Aorta (tissue), 5 donors: ENCODE measurements at regions of chr19 and their contacts with region 1.

Region 1: DNA sequence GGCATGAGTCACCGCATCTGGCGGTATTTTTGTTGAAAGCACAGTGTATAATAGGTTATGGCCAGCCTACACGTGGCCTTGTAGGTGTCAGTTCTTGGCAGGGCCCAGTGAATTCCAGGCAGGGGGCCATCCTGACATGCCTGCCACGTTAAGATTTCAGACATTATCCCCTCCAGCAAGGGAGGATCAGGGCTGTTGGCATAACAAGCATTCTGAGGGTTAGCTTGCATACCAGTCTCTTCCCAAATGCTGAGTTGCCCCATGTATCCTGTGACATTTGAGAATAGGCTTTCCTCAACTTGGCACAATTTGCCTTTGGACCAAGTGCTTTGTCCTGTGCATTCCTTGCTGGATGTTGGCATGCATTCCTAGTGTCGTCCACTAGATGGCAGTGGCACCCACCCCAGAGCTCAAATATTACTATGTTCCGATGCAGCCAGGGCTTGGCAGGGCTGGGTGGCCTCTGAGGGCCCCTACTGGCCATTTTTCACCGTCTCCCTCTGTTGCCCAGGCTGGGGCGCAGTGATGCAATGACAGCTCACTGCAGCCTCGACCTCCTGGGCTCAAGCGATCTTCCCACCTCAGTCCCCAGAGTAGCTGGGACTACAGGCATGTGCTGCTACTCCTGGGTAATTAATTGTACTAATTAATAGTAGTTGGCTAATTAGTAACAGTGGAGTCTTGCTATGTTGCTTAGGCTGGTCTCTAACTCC is 31.2 kb downstream of the NLRP12 start:
- DNase-seq: peak; percentile 88 to 90
- ATAC-seq: peak; percentile 91
- H3K4me3 ChIP-seq: no peak overlapping the region
- H3K27ac ChIP-seq: no peak overlapping the region
- H3K4me1 ChIP-seq: no peaks in the 10 kb centered on the region
- H3K27me3 ChIP-seq: no peaks in the 10 kb centered on the region

Region 2: GRCh38 chr19:53671663-53672062 is 121.2 kb before region 1 on chr19:
- intact Hi-C with region 1: no loop called
- DNase-seq: no peak
- ATAC-seq: no peak
- H3K4me3 ChIP-seq: no peak overlapping the region
- H3K27ac ChIP-seq: no peak overlapping the region
- H3K4me1 ChIP-seq: no peaks in the 10 kb centered on the region
- H3K27me3 ChIP-seq: no peaks in the 10 kb centered on the region

Region 3: GRCh38 chr19:54023191-54023590 is 230.3 kb after region 1 on chr19:
- intact Hi-C with region 1: loop called (anchors 5 kb)
- DNase-seq: no peak
- ATAC-seq: no peak
- H3K4me3 ChIP-seq: no peak overlapping the region
- H3K27ac ChIP-seq: no peak overlapping the region
- H3K4me1 ChIP-seq: no peaks in the 10 kb centered on the region
- H3K27me3 ChIP-seq: no peaks in the 10 kb centered on the region

Region 4: GRCh38 chr19:54029930-54030490 is 237.1 kb after region 1 on chr19:
- intact Hi-C with region 1: loop called in 1 of 2 experiments (anchors 5 kb)
- DNase-seq: peak in 1 of 2 donors; percentile 56
- ATAC-seq: peak; percentile 52
- H3K4me3 ChIP-seq: no peak overlapping the region
- H3K27ac ChIP-seq: no peak overlapping the region
- H3K4me1 ChIP-seq: no peaks in the 10 kb centered on the region
- H3K27me3 ChIP-seq: no peaks in the 10 kb centered on the region